B cell (primary cell): ENCODE measurements at regions of chr6 and their contacts with region 1.

Region 1: GRCh38 chr6:116561377-116562018 is 7.9 kb downstream of the CALHM4 start:
- DNase-seq: peak; percentile 78
- ATAC-seq: peak; percentile 82
- H3K4me3 ChIP-seq: no peak overlapping the region
- H3K4me3 Mint-ChIP-seq: no peak overlapping the region
- H3K27ac ChIP-seq: no peak overlapping the region
- H3K27ac Mint-ChIP-seq: no peak overlapping the region
- H3K4me1 ChIP-seq: peaks cover 5 to 7% of the 10 kb centered on the region in 2 donors
- H3K4me1 Mint-ChIP-seq: peaks cover 4% of the 10 kb centered on the region
- H3K27me3 ChIP-seq: peaks cover 0 to 14% (median 9%) of the 10 kb centered on the region in 4 experiments
- H3K27me3 Mint-ChIP-seq: peaks cover 31% of the 10 kb centered on the region
- CTCF ChIP-seq: peak; percentile 98

Region 2: DNA sequence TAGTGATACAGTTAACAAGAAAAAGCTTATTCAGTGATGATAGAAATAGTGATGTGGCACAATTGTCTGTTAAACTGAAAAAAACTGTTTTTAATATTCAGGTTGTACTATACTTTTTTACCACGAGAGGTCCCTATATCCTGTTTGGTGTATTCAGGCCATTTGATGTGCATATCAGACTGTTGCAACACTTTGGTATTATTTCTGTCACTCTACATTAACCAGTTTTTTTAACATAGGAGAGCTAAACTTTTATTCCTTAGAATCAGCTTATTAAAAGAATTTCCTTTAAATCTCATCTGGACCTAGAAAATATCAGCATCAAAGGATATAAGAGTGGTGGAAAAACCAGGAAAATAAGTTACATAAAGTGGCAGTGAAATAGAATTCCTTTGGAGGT is 344.4 kb before region 1 on chr6:
- CTCF ChIA-PET with region 1: interaction called, 17 read pairs
- POLR2A ChIA-PET with region 1: interaction called, 7 read pairs
- intact Hi-C with region 1: loop called (anchors 1 kb)
- DNase-seq: peak; percentile 51
- ATAC-seq: no peak
- H3K4me3 ChIP-seq: no peak overlapping the region
- H3K4me3 Mint-ChIP-seq: no peak overlapping the region
- H3K27ac ChIP-seq: no peak overlapping the region
- H3K27ac Mint-ChIP-seq: no peak overlapping the region
- H3K4me1 ChIP-seq: no peaks in the 10 kb centered on the region
- H3K4me1 Mint-ChIP-seq: no peaks in the 10 kb centered on the region
- H3K27me3 ChIP-seq: no peaks in the 10 kb centered on the region
- H3K27me3 Mint-ChIP-seq: no peaks in the 10 kb centered on the region
- CTCF ChIP-seq: peak; percentile 66

Region 3: GRCh38 chr6:116268589-116269293 is 292.8 kb before region 1 on chr6:
- CTCF ChIA-PET with region 1: interaction called, 40 read pairs
- POLR2A ChIA-PET with region 1: no interaction called
- intact Hi-C with region 1: no loop called
- DNase-seq: peak; percentile 71
- ATAC-seq: peak; percentile 77
- H3K4me3 ChIP-seq: no peak overlapping the region
- H3K4me3 Mint-ChIP-seq: no peak overlapping the region
- H3K27ac ChIP-seq: no peak overlapping the region
- H3K27ac Mint-ChIP-seq: no peak overlapping the region
- H3K4me1 ChIP-seq: no peaks in the 10 kb centered on the region
- H3K4me1 Mint-ChIP-seq: peaks cover 22% of the 10 kb centered on the region
- H3K27me3 ChIP-seq: no peaks in the 10 kb centered on the region
- H3K27me3 Mint-ChIP-seq: no peaks in the 10 kb centered on the region
- CTCF ChIP-seq: peak; percentile 75

Region 4: DNA sequence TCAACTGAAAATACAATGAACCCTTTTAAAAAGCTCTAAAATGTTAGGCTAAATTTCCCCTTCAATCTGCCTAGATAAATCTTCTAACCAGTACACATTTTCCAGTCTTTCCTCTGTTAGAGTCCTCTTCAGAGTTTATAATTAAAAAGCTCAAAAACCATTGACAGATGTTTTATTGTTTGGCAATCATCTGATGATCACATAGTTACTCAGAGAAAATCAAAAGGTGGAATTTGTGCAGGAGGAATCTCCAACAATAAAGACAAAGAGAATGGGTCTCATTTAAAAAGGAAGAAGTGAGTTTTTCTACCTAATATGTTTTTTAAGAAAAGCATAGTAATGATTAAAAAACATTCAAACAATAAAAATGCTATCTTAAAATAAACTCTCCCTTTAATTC is 19.1 kb before region 1 on chr6:
- CTCF ChIA-PET with region 1: interaction called, 20 read pairs
- POLR2A ChIA-PET with region 1: no interaction called
- intact Hi-C with region 1: no loop called
- DNase-seq: no peak
- ATAC-seq: no peak
- H3K4me3 ChIP-seq: no peak overlapping the region
- H3K4me3 Mint-ChIP-seq: no peak overlapping the region
- H3K27ac ChIP-seq: no peak overlapping the region
- H3K27ac Mint-ChIP-seq: no peak overlapping the region
- H3K4me1 ChIP-seq: no peaks in the 10 kb centered on the region
- H3K4me1 Mint-ChIP-seq: no peaks in the 10 kb centered on the region
- H3K27me3 ChIP-seq: peaks cover 0 to 3% (median 0%) of the 10 kb centered on the region in 4 experiments
- H3K27me3 Mint-ChIP-seq: peaks cover 31% of the 10 kb centered on the region
- CTCF ChIP-seq: no peak